GM10248 (cell line): ENCODE measurements at regions of chr11 and their contacts with region 1.

Region 1: DNA sequence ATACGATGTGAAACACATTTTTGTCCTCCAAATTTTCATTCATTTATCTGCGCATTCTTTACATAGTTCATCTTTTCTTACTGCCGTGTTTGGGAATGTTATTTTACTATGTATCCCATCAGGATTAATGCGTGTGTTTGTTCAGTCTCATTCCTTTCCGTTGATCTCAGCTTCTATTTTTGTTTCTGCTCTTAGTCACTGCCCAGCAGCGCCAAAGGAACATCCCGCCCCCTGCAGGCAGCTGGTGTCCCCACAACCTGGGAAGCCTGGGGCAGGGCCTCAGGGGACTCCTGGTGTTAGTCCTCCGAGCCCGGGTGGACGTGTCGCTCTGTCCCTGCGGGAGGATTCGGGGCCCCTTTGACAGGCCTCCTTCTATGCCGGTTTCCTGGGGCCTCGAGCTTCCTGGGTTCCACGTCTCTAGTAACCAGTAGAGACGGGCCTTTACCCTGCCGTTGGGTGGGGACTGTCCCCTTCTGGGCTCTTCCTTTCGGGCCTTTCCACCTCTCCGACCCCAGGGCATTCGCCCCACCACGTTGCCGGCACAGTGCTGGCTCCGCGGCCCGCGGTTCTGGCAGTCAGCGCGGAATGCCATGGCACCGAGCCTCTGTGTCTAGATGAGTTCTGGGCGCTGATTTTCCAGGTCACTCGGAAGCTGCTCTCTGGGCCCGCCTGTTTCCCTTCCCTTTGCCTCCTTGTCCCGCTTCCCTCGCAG is 39.8 kb downstream of the WEE1 start:
- DNase-seq: peak; percentile 87
- CTCF ChIP-seq: peak; percentile 96

Region 2: DNA sequence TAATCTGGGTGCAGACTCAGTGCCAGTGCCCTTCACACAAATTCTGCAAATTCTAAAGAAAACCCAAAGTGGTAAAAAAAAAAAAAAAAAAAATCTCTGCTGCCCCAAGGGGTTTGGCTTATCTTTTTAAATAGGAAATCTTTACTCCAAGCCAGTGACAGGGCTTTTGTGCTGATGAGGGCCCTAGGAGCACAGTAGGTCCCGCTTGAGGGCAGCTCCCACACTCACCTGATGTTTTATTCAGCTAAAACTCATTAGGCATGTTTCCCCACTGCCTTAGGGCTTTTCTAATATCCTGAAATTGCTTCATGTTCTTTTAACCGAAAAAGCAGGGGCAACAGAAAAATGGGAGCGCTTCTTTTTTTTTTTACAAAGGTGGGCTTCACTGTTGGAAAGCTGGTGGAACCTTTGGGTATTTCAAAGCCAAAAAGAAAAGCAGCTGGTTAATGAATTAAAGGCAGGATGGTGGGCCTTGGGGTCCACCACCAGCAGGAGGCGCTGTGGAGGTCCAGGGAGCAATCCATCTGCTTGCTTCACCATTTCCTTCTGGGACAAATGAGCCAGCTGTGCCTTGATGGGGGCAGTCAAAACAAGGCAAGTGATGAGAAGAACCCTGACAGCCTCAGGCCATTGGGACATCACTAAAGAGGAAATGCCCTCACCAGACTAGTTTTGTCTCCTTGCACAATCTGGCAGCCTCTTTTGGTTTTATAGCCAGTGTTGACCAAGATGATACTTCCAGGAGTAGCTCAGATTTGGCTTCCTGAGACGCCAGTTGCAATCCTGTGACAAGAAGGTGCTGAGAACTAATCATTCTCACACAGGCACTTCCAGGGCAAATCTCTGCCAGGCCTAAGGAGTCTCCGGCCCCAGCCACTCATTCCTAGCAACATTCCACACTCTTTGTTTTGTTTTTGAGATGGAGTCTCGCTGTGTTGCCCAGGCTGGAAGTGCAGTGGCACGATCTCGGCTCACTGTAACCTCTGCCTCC is 78.2 kb before region 1 on chr11:
- CTCF ChIA-PET with region 1: interaction called, 56 read pairs
- POLR2A ChIA-PET with region 1: no interaction called
- DNase-seq: peak; percentile 78
- CTCF ChIP-seq: peak; percentile 79

Region 3: DNA sequence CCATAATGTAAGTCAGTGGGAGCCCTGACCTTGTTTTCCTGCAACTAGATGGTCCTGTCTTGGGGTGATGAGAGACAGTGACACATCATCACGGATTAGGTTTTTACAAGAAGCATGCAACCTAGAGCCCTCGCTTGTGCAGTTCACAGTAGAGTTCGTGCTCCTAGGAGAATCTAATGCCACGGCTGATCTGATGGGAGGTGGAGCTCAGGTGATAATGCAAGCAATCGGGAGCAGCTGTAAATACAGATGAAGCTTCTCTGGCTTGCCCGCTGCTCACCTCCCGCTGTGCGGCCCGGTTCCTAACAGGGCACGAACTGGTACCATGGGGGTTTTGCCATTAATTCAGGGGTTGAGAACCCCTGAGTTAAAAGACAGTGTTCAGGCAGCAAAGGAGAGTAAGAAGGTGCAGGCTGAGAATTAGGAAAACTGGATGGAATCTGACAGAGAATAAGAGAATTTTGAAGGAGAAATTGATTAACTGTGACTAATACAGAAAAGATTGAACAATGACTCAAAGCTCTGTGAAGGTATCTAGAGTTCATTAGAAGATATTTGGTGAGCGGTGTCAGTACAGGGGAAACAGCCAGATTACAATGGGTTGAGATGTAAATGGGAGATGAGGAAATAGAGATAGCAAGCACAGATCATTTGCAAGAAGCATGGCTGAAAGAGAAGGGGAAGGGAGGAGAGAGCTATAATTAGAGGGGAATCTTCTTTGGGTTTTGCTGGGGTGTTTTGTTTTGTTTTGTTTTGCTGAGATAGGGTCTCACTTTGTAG is 18.8 kb before region 1 on chr11:
- CTCF ChIA-PET with region 1: interaction called, 106 read pairs
- POLR2A ChIA-PET with region 1: interaction called, 3 read pairs
- DNase-seq: no peak
- CTCF ChIP-seq: no peak

Region 4: GRCh38 chr11:9626496-9627394 is 13.5 kb after region 1 on chr11:
- CTCF ChIA-PET with region 1: interaction called, 23 read pairs
- POLR2A ChIA-PET with region 1: no interaction called
- DNase-seq: no peak
- CTCF ChIP-seq: no peak

Region 5: DNA sequence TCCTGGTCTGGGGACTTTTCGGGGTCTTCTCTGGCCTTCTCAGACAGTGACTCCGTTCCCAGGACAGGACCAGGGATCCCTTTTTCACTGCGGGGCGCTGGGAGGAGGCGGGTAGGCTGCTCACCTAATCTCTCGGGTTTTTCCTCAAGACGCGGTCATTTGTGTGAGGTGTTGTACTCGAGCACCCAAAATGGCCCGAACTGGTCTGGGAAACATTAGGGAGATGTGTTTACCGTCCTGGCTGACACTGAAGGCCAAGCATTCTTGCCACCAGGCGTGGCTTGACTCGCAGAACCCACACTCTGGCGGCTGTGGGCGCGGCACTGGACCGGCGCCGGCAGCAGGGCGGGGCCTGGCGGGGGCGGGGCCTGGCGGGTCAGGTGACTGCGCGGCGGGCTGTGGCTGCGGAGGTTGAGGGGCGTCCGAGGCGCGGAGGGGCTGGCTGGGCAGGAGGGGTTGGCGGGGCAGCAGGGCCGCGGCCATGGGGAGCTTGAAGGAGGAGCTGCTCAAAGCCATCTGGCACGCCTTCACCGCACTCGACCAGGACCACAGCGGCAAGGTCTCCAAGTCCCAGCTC is 50.5 kb after region 1 on chr11 and contains the start of gene SWAP70:
- CTCF ChIA-PET with region 1: interaction called, 14 read pairs
- POLR2A ChIA-PET with region 1: no interaction called
- DNase-seq: peak; percentile 93
- CTCF ChIP-seq: no peak

Region 6: GRCh38 chr11:9688716-9689511 is 75.6 kb after region 1 on chr11:
- CTCF ChIA-PET with region 1: interaction called, 18 read pairs
- POLR2A ChIA-PET with region 1: interaction called, 9 read pairs
- DNase-seq: peak; percentile 45
- CTCF ChIP-seq: no peak

Region 7: DNA sequence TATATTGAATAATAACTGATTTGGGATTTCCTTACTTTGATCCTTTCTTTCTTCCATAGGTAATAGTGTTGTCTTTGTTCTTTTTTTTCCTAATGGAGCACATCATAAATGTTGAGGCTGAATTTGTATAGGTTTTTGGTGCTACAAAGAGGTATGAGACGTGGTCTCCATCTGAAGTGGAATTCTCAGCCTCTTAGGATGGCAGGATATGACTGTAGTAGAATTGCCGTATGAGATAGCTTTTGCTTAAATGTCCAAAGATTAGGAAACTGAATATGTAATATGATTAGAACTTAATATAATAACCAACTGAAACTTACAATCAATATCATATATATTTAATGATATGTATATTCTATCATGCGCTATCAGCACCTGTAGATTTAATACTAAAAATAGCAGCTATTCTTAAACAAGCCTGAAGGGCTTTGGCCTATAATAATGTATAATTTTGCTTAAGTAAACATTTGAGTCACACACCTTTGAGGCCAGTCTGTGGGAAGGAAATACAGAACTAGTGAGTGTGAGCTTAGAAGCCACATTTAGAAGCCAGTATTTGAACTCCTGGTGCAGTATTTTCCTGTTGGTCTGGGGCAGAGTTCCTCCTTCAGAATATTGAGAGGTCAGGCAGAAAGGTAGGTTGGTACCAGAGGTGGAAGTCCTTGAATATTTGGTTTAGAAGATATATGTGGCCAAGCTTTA is 113.2 kb after region 1 on chr11:
- CTCF ChIA-PET with region 1: interaction called, 10 read pairs
- POLR2A ChIA-PET with region 1: no interaction called
- DNase-seq: peak; percentile 28
- CTCF ChIP-seq: no peak